IMR-90 (cell line): ENCODE measurements at regions of chr2 and their contacts with region 1.

Region 1: DNA sequence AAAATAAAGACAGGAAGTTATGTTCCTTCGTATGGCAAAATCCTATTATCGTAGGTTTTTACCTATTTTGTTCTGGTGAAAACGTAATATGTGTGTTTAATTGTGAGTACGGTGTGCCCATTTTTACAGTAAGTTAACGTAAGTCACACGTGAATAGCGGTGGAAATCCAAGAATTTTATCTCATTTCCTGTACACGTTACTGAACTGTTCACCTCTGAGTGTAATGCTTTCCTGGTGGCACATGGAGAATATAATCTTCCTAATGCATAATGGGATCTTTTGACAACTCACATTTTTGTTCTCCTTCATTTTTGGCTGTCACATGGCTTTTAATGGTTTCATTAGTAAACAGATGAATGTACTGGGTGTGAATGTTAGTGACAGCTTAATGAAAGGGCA is 28.2 kb downstream of the BCL2L11 start:
- DNase-seq: no peak
- ATAC-seq: no peak
- H3K4me3 ChIP-seq: no peak overlapping the region
- H3K27ac ChIP-seq: no peak overlapping the region
- H3K4me1 ChIP-seq: no peaks in the 10 kb centered on the region
- H3K27me3 ChIP-seq: no peaks in the 10 kb centered on the region
- CTCF ChIP-seq: no peak
- POLR2A ChIP-seq: no peak
- RAD21 ChIP-seq: no peak

Region 2: DNA sequence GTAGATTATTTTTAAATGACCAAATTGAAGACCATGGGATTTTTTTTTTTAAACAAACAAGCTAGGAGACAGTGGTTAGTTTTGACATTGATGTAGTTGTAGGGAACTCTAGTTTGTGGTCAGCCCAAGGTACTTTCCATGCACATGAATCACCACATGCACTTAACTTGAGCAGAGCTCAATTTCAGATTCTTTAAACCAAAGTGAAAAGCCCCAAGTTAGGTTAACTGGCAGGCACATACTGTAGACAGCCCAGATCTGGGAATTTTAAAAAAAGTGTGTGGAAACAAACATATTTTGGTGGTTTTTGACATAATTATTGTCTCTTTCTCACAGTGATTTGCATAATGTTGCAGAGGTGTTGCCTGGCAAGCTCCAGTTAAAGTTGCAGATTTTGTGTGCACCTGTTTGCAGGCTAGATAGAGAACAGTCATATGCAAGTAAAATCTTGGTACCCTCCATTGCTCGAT is 60.2 kb after region 1 on chr2:
- CTCF ChIA-PET with region 1: no interaction called
- POLR2A ChIA-PET with region 1: no interaction called
- dilution Hi-C with region 1: no loop called
- in situ Hi-C with region 1: no loop called
- intact Hi-C with region 1: loop called (anchors 5 kb)
- DNase-seq: peak; percentile 93
- ATAC-seq: peak; percentile 56; the same call in 1 of the 2 replicates
- H3K4me3 ChIP-seq: no peak overlapping the region
- H3K27ac ChIP-seq: no peak overlapping the region
- H3K4me1 ChIP-seq: peaks cover 1% of the 10 kb centered on the region; the same call in 1 of the 2 replicates
- H3K27me3 ChIP-seq: no peaks in the 10 kb centered on the region
- CTCF ChIP-seq: no peak
- POLR2A ChIP-seq: no peak
- RAD21 ChIP-seq: no peak